CD14-positive monocyte (primary cell): ENCODE measurements at regions of chr7 and their contacts with region 1.

Region 1: DNA sequence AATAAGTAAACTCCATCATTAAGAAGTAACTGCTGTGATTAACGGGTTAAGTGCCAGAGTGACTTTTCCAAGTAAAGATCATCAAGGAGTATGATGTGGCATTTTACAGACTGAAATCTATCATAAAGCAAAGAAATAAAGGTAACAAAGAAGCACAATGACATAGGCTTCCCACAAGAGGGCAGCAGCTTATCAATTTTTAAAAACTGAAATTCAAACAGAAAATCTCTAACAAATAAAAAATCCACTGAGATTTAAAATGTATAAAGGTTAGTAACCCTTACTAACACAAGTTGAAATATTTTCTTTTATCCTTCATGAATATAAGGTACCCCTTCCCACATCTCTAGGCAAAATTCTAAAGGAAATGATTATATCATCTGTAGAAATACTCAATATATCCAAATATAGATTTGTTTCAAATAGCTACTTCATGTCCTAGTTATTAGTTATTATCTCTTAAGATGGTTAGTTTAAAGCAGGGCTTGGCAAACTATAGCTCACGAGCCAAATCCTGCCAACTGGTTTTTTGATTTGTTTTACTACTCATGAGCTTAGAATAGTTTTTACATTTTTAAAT is 29.2 kb downstream of the FAM3C start:
- DNase-seq: peak; percentile 5 to 23 (median 6)
- H3K4me3 ChIP-seq: no peak overlapping the region
- H3K4me3 Mint-ChIP-seq: no peak overlapping the region
- H3K27ac ChIP-seq: no peak overlapping the region
- H3K27ac Mint-ChIP-seq: no peak overlapping the region
- H3K4me1 ChIP-seq: no peaks in the 10 kb centered on the region
- H3K4me1 Mint-ChIP-seq: no peaks in the 10 kb centered on the region
- H3K27me3 ChIP-seq: no peaks in the 10 kb centered on the region
- H3K27me3 Mint-ChIP-seq: no peaks in the 10 kb centered on the region
- CTCF ChIP-seq: peak; percentile 79

Region 2: DNA sequence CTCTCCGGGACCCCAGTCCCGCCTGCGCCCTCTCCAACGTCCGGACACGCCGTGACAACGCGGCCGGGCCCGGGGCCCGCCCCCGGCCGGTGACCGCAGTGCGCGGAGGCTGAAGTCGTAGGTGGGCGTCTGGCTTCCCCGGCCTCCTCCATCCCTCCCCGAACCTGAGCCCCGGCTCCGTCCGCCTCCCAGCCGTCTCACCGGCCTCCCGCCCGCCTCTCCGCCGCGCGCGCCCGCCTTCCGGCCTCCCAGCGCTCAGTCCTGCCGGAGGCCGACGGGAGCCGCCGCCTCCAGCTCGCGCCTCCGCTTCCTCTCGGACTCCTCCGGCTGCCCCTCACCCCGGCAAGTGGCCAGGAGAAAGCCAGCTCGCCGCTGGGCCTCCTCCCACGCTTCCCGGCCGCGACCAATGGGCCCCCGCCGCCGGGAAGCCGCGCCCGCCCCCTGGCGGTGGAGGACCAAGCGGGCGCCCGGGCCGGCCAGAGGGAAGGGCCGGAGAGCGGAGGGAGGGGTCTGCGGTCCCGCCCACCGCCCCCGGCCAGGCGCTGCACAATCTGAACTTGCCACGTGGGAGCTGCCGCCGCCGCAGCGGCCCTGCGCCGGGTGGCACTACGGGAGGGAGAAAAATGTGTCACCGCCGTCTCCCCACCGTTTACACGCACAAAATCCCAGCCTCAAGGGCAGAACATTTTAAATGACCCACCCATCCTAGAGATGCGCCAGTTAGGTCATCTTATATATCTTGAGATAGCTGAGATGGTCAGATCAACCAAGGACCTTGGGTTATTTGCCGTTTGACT is 29.2 kb after region 1 on chr7 and contains the start of gene FAM3C:
- intact Hi-C with region 1: no loop called
- DNase-seq: peak; percentile 86 to 92 (median 87)
- H3K4me3 ChIP-seq: peak within 1 kb of the TSS; percentile 50 to 95 (median 84)
- H3K4me3 Mint-ChIP-seq: peak within 1 kb of the TSS; percentile 88 to 91
- H3K27ac ChIP-seq: peak within 1 kb of the TSS in 1 of 2 donors; percentile 68
- H3K27ac Mint-ChIP-seq: peak within 1 kb of the TSS in 6 of 7 donors; percentile 54 to 86 (median 73)
- H3K4me1 ChIP-seq: peaks cover 10 to 15% of the 10 kb centered on the region in 2 donors
- H3K4me1 Mint-ChIP-seq: peaks cover 14% of the 10 kb centered on the region
- H3K27me3 ChIP-seq: no peaks in the 10 kb centered on the region
- H3K27me3 Mint-ChIP-seq: peaks cover 0 to 1% (median 1%) of the 10 kb centered on the region in 3 donors
- CTCF ChIP-seq: peak; percentile 98
- polyA plus RNA-seq, gene FAM3C: 5.5 to 13.0 (median 7.3) TPM

Region 3: DNA sequence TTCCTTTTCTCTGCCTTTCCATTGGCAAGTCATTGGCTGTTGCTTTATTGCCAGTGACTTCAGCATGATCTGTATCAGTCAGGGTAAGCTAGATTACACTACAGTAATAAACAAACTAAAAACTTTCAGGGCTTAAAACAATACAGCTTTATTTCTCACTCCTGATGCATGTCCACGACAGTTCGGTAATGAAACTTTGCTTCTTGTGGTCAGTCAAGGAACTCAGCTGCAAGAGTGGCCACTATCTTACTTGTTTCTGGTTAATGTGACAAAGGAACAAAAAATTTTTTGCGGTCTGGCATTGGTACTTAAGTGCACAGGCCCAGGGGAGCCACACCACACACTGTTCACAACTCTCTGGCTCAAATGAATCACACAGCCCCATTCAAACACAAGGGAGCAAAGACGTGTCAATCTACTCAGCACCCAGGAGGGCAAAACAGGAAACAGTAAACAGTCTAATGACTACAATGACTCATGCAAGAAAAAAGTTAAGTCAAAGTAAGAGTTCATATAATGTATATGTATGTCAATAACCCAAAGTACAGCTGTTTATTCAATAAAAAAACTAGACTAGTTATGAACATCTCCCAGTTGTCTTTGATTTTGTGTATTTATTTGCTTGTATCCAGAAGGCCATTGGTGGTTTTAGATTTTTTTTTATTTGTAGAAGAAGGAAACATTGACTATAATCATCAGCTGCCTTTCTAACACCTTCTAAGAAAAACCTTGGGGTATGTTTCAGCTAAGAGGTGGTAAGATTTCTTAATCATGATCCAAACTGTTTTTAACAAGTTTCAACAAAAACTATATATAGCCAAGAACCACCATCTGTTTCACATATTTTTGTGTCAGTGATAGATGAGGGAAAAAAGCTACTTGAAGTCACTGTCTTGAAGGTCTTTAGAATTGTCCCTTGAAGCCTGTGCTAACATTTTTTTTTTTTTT is 163.6 kb after region 1 on chr7:
- intact Hi-C with region 1: no loop called
- DNase-seq: no peak
- H3K4me3 ChIP-seq: no peak overlapping the region
- H3K4me3 Mint-ChIP-seq: no peak overlapping the region
- H3K27ac ChIP-seq: no peak overlapping the region
- H3K27ac Mint-ChIP-seq: no peak overlapping the region
- H3K4me1 ChIP-seq: no peaks in the 10 kb centered on the region
- H3K4me1 Mint-ChIP-seq: no peaks in the 10 kb centered on the region
- H3K27me3 ChIP-seq: no peaks in the 10 kb centered on the region
- H3K27me3 Mint-ChIP-seq: peaks cover 0 to 2% (median 0%) of the 10 kb centered on the region in 3 donors
- CTCF ChIP-seq: no peak

Region 4: DNA sequence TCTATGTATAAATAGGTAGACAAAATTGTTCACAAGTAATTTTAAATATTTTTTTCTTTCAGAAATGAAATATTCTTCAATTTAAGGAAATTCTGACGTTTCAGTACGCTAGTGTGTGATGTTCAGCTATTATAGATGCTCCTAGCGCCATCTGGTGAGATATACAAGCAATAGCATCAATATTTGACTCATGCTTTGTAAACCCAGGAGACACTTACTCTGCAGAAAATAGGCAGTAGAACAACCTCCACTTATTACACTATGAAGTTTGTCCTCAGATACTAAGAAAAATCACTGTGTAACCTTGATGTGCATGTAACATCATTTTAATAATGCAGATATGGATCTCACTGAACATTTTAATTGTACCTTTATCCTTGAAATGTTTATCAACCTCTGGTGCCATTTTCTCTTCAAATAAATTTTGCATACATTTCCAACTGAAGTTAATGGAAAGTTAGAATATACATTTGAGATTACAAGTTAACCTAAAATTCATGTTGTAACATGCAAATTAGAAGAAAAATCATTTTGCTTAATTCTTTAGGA is 180.7 kb after region 1 on chr7:
- intact Hi-C with region 1: loop called (anchors 2 to 5 kb)
- DNase-seq: peak; percentile 4 to 42 (median 41)
- H3K4me3 ChIP-seq: no peak overlapping the region
- H3K4me3 Mint-ChIP-seq: no peak overlapping the region
- H3K27ac ChIP-seq: no peak overlapping the region
- H3K27ac Mint-ChIP-seq: no peak overlapping the region
- H3K4me1 ChIP-seq: no peaks in the 10 kb centered on the region
- H3K4me1 Mint-ChIP-seq: no peaks in the 10 kb centered on the region
- H3K27me3 ChIP-seq: no peaks in the 10 kb centered on the region
- H3K27me3 Mint-ChIP-seq: peaks cover 0 to 1% (median 0%) of the 10 kb centered on the region in 3 donors
- CTCF ChIP-seq: peak; percentile 82

Region 5: GRCh38 chr7:121582258-121582657 is 215.3 kb after region 1 on chr7:
- intact Hi-C with region 1: no loop called
- DNase-seq: no peak
- H3K4me3 ChIP-seq: no peak overlapping the region
- H3K4me3 Mint-ChIP-seq: no peak overlapping the region
- H3K27ac ChIP-seq: no peak overlapping the region
- H3K27ac Mint-ChIP-seq: no peak overlapping the region
- H3K4me1 ChIP-seq: no peaks in the 10 kb centered on the region
- H3K4me1 Mint-ChIP-seq: no peaks in the 10 kb centered on the region
- H3K27me3 ChIP-seq: no peaks in the 10 kb centered on the region
- H3K27me3 Mint-ChIP-seq: peaks cover 0 to 2% (median 1%) of the 10 kb centered on the region in 3 donors
- CTCF ChIP-seq: no peak

Region 6: DNA sequence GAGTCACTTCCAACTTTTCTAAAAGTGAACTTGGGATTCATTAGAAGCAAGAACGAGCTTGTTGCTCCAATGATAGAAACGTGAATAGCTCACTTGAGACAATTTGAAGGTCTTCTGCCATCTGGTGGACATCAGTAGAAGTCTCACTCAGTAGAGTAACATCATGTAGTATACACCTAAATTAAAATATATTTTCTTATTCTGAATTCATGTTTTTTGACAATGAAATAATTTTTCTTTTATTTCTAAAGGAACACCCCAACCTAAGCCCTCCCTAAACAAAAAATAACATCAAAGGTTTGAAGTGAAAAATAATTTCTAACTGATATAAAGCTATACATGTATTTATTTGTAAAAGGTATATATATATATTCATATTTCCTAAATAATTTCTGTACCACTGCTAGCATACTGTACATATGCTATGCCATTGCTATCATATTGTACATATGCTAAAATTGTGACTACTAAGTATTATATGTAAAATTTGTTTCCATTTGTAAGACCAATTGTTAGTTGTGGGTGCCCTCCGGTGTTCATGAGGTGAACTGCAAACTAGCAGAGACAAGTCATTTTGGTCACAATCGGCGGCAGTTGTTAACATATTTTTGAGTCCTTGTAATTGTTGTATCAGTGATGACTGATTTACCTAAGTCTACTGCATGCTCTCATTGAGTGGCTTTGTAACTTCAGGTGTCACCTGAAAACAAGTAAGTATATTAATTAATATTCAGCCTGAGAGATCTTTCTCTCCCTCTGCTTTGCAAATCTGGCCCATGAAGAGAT is 627.9 kb after region 1 on chr7:
- intact Hi-C with region 1: loop called in 1 of 2 experiments (anchors 10 kb)
- DNase-seq: peak in 1 of 3 donors; percentile 4
- H3K4me3 ChIP-seq: no peak overlapping the region
- H3K4me3 Mint-ChIP-seq: no peak overlapping the region
- H3K27ac ChIP-seq: no peak overlapping the region
- H3K27ac Mint-ChIP-seq: no peak overlapping the region
- H3K4me1 ChIP-seq: no peaks in the 10 kb centered on the region
- H3K4me1 Mint-ChIP-seq: no peaks in the 10 kb centered on the region
- H3K27me3 ChIP-seq: no peaks in the 10 kb centered on the region
- H3K27me3 Mint-ChIP-seq: peaks cover 0 to 3% (median 2%) of the 10 kb centered on the region in 3 donors
- CTCF ChIP-seq: peak; percentile 81